ENCODE measurements at regions of chr15 and their contacts with region 1.

Region 1: GRCh38 chr15:82749951-82750830 is 40.5 kb upstream of the AP3B2 start:
- DNase-seq: peak; percentile 82
- H3K4me3 Mint-ChIP-seq: peak overlapping the region; percentile 100
- H3K27ac Mint-ChIP-seq: peak overlapping the region; percentile 97
- H3K4me1 Mint-ChIP-seq: peaks cover 39% of the 10 kb centered on the region
- H3K27me3 Mint-ChIP-seq: no peaks in the 10 kb centered on the region

Region 2: GRCh38 chr15:82597815-82598214 is 152.4 kb before region 1 on chr15:
- intact Hi-C with region 1: no loop called
- DNase-seq: no peak
- H3K4me3 Mint-ChIP-seq: no peak overlapping the region
- H3K27ac Mint-ChIP-seq: no peak overlapping the region
- H3K4me1 Mint-ChIP-seq: no peaks in the 10 kb centered on the region
- H3K27me3 Mint-ChIP-seq: peaks cover 12% of the 10 kb centered on the region

Region 3: DNA sequence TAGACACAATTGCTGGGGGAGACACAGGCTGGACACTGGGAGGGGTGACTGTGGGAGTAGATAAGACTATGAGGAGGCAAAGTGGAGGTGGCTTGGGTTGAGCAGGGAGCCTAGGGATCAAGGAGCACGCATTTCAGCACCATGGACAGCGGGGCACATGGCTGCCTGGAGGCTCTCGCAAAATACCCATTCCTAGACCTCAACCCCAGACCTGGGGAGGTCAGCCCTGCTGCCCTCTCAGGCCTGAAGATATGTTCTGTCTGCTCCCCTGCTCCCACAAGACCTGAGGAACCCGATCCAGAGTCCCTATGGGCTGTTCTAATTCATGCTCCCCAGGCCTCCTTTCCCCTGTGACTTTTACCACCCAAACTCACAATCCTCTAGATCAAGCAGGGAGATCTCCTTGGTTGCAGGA is 87.0 kb before region 1 on chr15:
- intact Hi-C with region 1: loop called (anchors 1 kb)
- DNase-seq: peak; percentile 26
- H3K4me3 Mint-ChIP-seq: no peak overlapping the region
- H3K27ac Mint-ChIP-seq: no peak overlapping the region
- H3K4me1 Mint-ChIP-seq: no peaks in the 10 kb centered on the region
- H3K27me3 Mint-ChIP-seq: no peaks in the 10 kb centered on the region

Region 4: DNA sequence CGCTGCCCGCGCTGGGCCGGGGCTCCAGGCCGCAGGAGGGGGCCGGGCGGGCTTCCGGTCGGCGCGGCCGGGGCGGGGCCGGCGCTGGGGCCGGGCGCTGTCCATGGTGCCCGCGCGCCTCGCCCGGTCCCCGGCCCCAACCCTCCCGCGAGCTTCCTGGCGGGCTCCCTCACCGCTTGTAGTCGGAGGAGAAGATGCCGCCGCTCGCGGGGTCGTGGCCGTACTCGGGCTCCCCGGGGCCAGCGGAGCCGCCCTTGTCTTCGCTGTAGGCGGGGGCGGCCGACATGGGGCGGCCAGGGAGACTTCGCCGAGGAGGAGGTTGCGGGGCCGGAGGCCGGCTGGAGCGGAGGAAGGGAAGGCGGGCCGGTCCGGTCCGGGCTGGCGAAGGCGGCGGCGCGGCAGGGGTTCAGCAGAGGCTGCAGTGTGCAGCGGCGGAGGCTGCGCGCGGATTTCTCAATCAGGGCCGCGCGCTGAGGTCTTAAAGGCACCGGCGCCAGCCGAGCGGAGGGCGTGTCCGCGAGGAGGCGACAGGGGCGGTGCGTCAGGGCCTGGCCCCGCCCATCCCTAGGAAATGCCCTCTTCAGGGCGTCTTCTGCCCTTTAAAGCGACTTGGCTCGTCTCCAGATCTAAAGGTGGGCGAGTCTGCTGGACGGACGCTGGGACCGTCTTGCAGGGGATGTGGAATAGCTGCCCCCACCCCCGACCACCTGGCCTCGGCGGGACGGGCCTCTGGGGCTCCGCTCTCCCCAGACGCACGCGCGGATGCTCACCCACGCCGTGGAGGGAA is 40.6 kb before region 1 on chr15 and contains the start of gene AP3B2:
- intact Hi-C with region 1: loop called (anchors 2 kb)
- DNase-seq: peak; percentile 71
- H3K4me3 Mint-ChIP-seq: peak within 1 kb of the TSS; percentile 62
- H3K27ac Mint-ChIP-seq: no peak within 1 kb of the TSS
- H3K4me1 Mint-ChIP-seq: no peaks in the 10 kb centered on the region
- H3K27me3 Mint-ChIP-seq: peaks cover 6% of the 10 kb centered on the region
- total RNA-seq, gene AP3B2: 0.21 TPM in 1 of 2 replicates, not detected in the other

Region 5: DNA sequence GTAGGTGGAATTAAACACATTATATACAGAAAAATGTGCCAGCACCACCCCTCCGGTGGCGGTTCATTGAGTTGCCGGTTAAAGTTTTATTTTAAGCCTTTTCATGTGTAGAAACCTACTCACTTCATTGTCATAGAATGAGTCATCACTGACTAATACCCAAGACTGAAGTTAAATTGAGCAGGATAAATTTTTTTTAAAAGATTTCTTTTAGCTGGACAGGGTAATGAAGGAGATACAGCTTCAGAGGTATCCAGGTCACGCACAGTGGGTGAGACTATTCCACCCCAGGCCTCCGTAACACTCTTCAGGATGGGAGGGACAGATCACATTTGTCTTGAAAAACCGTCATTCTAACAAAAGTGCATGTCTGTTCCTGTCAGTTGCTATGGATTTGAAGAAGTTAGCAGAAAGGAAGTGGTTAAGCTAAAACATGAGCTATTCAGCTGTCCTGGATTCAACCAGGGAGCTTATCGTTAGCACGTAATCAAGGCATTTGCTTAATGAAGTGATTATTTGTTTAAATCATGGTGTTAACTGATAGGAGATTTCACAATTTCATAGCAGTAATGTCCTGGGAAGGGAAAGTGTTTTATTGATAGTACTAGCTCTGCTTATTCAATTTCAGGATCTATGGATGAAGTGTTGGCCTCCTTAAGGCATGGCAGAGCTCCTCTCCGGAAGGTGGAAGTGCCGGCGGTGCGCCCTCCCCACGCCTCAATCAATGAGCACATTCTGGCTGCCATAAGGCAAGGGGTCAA is 82.6 kb after region 1 on chr15:
- intact Hi-C with region 1: loop called (anchors 2 kb)
- DNase-seq: peak; percentile 17
- H3K4me3 Mint-ChIP-seq: peak overlapping the region; percentile 57
- H3K27ac Mint-ChIP-seq: peak overlapping the region; percentile 87
- H3K4me1 Mint-ChIP-seq: peaks cover 54% of the 10 kb centered on the region
- H3K27me3 Mint-ChIP-seq: peaks cover 2% of the 10 kb centered on the region

Region 6: DNA sequence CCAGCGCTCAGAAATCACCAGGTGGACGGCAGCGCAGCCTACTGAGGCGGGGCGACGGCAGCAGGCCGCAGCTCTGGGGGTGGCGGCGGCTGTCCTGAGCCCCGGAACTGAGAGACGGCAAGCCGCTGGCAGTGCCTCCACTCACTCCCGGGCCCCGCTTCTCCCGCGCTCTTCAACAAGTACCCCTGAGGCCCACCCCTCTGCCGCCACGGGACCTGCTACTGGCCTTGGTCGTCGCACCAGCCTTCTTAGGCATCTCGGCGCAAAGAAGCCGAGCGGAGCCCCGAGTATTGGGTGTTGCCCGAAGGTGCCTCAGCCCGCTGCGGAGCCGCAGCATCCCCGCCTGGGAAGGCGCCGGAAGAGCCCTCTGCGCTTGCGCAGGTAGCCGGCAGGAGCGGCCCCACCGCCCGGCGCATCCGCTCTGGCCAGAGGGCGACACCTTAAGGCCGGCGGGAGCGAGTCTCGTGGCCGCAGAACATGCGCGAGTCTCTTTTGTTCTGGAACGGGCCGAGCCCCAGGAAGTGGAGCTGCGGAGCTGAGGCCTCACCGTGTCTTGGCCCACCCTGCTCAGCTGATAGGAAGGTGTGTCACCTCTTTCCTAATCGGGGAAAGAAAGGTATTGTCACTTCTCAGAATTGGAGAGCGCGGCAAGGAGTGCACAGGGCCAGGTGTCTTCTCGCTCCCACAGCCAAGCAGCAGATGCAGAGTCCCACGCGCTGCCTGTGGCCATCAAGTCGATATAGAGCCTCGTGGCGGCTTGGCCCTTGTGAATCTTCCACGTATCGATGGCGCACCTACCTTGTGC is 261.3 kb after region 1 on chr15 and contains the start of gene C15orf40:
- intact Hi-C with region 1: loop called (anchors 1 kb)
- DNase-seq: peak; percentile 84
- H3K4me3 Mint-ChIP-seq: peak within 1 kb of the TSS; percentile 99
- H3K27ac Mint-ChIP-seq: peak within 1 kb of the TSS; percentile 98
- H3K4me1 Mint-ChIP-seq: peaks cover 50% of the 10 kb centered on the region
- H3K27me3 Mint-ChIP-seq: no peaks in the 10 kb centered on the region
- total RNA-seq, gene C15orf40: 24.2 and 29.0 TPM in 2 replicates